ENCODE measurements at regions of chr5 and their contacts with region 1.

Region 1: GRCh38 chr5:65137631-65138030 is 344.1 kb downstream of the ADAMTS6 start:
- DNase-seq: no peak
- CTCF ChIP-seq: no peak

Region 2: DNA sequence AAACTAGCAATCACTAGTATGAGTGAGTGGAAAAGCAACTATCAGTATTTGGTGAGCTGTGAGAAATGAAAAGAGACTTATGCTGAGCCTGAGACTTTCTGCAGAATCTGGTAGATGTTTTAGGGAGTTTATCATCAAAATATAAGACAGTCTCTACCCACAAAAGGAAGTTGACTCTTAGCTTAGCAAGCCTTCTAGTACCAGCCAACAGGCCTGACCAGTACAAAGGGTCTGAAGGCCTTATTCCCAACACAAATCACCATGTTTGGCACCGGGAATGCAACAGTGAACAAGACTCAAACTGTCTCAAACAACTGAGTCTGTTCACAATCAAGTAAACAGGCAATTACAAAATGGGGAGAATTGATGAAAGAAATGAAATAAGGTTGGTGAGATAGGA is 124.5 kb before region 1 on chr5:
- CTCF ChIA-PET with region 1: no interaction called
- POLR2A ChIA-PET with region 1: no interaction called
- DNase-seq: no peak
- CTCF ChIP-seq: no peak

Region 3: DNA sequence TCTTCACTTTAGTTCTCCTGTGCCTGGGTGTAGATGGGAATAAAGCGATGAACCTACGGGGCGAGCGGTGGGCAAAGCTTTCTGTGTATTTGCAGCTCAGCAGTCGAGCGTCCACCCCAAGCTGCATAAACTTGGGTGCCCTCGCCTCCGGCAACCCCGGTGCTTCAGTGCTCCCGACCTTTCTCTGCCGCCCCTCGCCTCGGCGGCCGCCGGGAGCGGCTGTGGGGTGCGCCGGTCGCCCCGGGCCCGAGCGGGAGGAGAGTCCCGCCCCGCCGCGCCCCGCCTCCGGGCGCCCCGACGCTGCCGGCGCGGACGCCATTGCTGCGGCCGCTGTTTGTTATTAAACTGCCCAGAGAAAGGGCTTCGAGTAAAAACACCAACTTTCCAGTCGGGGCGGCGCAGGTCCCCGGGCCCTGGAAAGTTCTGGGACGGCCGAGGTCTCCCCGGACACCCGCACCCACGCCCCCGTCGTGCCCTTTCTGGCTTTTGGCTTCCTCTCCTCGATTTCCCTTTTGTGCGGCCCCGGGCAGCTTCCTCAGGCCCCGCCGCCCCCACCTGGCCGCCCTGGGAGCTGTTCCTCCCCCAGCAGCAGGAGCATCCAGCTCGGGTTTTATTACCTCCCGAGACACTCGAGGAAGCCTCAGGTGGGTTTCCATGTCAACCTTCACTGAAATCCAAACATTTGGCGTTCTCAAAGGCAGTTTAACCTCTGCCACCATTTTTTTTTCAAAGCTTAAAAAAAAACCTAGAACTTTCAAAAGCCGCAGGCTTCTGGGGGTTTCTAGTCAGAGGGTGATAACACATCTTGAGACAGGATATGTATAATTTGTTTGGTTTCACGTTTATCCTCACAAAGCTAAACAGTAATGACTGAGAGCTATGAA is 34.6 kb before region 1 on chr5:
- CTCF ChIA-PET with region 1: no interaction called
- POLR2A ChIA-PET with region 1: no interaction called
- DNase-seq: peak; percentile 79
- CTCF ChIP-seq: peak; percentile 30

Region 4: GRCh38 chr5:65125591-65126541 is 11.8 kb before region 1 on chr5:
- CTCF ChIA-PET with region 1: interaction called, 11 read pairs
- POLR2A ChIA-PET with region 1: interaction called, 3 read pairs
- DNase-seq: no peak
- CTCF ChIP-seq: no peak